ENCODE measurements at regions of chr1 and their contacts with region 1.

Region 1: DNA sequence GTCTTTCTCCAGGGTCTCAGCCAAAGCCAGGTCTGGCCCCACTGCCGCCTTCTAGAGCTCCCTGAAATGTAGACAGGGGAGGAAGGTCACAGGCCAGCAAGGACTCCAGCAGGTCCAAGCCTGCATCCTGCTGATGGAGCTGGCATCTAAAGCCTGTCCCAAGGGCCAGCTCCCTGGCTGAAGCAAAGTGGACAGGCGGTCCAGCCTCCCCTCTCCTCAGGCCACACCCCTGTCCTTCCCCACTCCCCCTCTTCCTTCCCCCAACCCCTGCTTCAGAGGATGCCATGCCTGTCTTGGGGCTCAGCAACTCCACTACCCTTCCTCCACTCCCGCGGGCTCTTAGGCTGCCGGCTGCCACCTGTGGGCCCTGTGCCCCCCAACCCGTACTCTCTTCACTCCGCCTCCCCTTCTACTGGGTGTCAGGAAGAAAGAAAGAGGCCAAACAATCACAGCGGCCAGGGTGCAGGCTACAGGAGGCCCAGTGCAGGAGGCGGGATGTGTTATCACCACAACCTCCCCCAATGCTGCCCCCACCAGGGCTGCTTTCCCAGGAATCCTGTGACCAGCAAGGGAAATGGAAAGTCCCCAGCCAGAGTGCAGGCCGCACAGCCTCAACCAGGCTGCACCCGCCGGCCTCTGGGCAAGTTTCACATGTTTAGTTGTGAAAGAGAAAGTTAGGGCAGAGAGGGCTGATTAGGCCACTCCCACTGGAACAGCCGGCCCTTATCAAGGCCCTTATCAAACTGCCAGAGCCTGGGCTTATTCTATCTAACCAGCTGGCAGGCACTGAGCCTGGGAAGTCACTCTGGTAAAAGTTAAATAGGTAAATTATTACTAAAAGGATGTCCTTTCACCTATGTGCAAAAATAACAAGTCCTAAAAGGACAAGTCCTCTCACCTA is 34.1 kb downstream of the ACOT7 start:
- DNase-seq: peak; percentile 73
- H3K4me3 ChIP-seq: no peak overlapping the region
- H3K27ac ChIP-seq: peak overlapping the region; percentile 54
- H3K4me1 ChIP-seq: peaks cover 48% of the 10 kb centered on the region
- H3K27me3 ChIP-seq: no peaks in the 10 kb centered on the region
- CTCF ChIP-seq: no peak

Region 2: DNA sequence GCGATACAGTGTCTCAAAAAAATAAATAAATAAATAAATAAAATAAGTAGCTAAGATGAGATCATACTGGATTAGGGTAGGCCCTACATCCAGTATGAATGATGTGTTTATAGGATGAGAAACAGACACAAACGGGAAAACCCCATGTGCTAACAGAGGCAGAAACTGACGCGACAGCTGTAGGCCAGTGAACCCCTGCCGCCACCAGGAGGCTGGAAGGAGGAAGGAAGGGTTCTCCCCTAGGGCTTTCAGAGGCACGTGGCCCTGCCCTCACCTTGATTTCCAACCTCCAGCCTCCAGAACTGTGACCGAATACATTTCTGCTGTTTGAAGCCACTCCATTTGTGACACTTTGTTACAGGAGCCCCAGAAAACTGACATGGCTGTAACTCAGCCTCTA is 217.9 kb before region 1 on chr1:
- CTCF ChIA-PET with region 1: no interaction called
- dilution Hi-C with region 1: no loop called
- in situ Hi-C with region 1: no loop called
- intact Hi-C with region 1: no loop called
- DNase-seq: peak; percentile 30
- H3K4me3 ChIP-seq: no peak overlapping the region
- H3K27ac ChIP-seq: no peak overlapping the region
- H3K4me1 ChIP-seq: no peaks in the 10 kb centered on the region
- H3K27me3 ChIP-seq: no peaks in the 10 kb centered on the region
- CTCF ChIP-seq: no peak

Region 3: GRCh38 chr1:6393400-6394187 is 34.1 kb after region 1 on chr1 and contains the start of gene ACOT7:
- CTCF ChIA-PET with region 1: interaction called, 3 read pairs
- dilution Hi-C with region 1: no loop called
- in situ Hi-C with region 1: loop called in 1 of 2 experiments (anchors 5 kb)
- intact Hi-C with region 1: loop called (anchors 1 kb)
- DNase-seq: peak; percentile 92
- H3K4me3 ChIP-seq: peak within 1 kb of the TSS; percentile 67 to 73 (median 73)
- H3K27ac ChIP-seq: peak within 1 kb of the TSS; percentile 64
- H3K4me1 ChIP-seq: peaks cover 27% of the 10 kb centered on the region
- H3K27me3 ChIP-seq: no peaks in the 10 kb centered on the region
- CTCF ChIP-seq: peak in 1 of 2 donors; percentile 49
- total RNA-seq, gene ACOT7: 67.2 to 193 TPM

Region 4: GRCh38 chr1:6401673-6402072 is 42.2 kb after region 1 on chr1:
- CTCF ChIA-PET with region 1: no interaction called
- dilution Hi-C with region 1: no loop called
- in situ Hi-C with region 1: loop called in 1 of 2 experiments (anchors 5 kb)
- intact Hi-C with region 1: loop called (anchors 1 kb)
- DNase-seq: peak; percentile 67
- H3K4me3 ChIP-seq: no peak overlapping the region
- H3K27ac ChIP-seq: no peak overlapping the region
- H3K4me1 ChIP-seq: no peaks in the 10 kb centered on the region
- H3K27me3 ChIP-seq: no peaks in the 10 kb centered on the region
- CTCF ChIP-seq: no peak

Region 5: DNA sequence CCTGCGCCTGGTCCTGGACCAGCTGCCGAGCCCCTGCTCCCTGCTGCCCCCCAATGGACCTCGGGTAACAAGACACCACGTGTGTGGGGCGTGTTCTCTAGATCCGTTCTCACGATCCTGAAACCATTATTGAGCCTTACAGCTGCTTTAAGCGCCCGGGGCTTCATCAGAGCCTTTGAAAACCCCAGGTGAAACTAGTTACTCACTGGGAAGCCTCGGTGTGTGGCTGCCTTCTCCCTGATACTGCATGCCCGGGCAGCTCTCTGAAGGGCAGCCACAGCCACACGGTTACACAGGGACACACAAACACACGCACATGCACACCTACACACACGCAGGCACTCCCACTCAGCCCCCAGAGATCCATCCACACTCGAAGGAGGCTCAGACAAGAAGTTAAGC is 55.0 kb after region 1 on chr1:
- CTCF ChIA-PET with region 1: no interaction called
- dilution Hi-C with region 1: no loop called
- in situ Hi-C with region 1: loop called in 1 of 2 experiments (anchors 10 kb)
- intact Hi-C with region 1: no loop called
- DNase-seq: peak; percentile 100
- H3K4me3 ChIP-seq: no peak overlapping the region
- H3K27ac ChIP-seq: peak overlapping the region; percentile 96
- H3K4me1 ChIP-seq: peaks cover 51% of the 10 kb centered on the region
- H3K27me3 ChIP-seq: no peaks in the 10 kb centered on the region
- CTCF ChIP-seq: peak; percentile 62 to 73

Region 6: GRCh38 chr1:7218210-7218832 is 858.9 kb after region 1 on chr1:
- CTCF ChIA-PET with region 1: no interaction called
- dilution Hi-C with region 1: no loop called
- in situ Hi-C with region 1: no loop called
- intact Hi-C with region 1: loop called (anchors 5 kb)
- DNase-seq: peak; percentile 14
- H3K4me3 ChIP-seq: no peak overlapping the region
- H3K27ac ChIP-seq: no peak overlapping the region
- H3K4me1 ChIP-seq: no peaks in the 10 kb centered on the region
- H3K27me3 ChIP-seq: no peaks in the 10 kb centered on the region
- CTCF ChIP-seq: peak; percentile 78 to 83